ENCODE measurements at regions of chr6 and their contacts with region 1.

Region 1: GRCh38 chr6:36594029-36594815 is at the start of gene SRSF3:
- DNase-seq: peak; percentile 99
- H3K4me3 ChIP-seq: peak within 1 kb of the TSS; percentile 71 to 85 (median 81)
- H3K27ac ChIP-seq: peak within 1 kb of the TSS; percentile 92 to 98 (median 96)
- H3K4me1 ChIP-seq: peaks cover 0 to 39% (median 34%) of the 10 kb centered on the region in 4 donors
- H3K27me3 ChIP-seq: no peaks in the 10 kb centered on the region
- CTCF ChIP-seq: peak in 3 of 4 experiments; percentile 40 to 51 (median 43)
- EP300 ChIP-seq: peak in 2 of 4 donors; percentile 3 to 11
- POLR2A ChIP-seq: peak; percentile 100
- total RNA-seq, gene SRSF3: 101 to 168 (median 122) TPM

Region 2: DNA sequence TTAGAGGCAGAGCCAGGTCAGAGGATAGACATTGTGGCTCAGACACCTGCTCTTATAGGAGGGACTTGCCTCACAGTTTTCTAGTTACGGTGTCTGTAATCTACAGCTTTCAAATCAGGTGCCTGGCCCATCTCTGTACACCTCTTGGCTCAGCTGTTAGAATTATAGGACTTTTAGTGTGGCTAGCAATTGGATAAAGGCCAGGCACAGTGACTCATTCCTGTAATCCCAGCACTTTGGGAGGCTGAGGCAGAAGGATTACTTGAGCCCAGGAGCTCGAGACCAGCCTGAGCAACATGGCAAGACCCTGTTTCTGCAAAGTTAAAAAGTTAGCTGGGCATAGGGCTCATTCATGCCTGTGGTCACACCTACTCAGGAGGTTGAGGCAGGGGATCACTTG is 377.7 kb before region 1 on chr6:
- intact Hi-C with region 1: no loop called
- DNase-seq: no peak
- H3K4me3 ChIP-seq: no peak overlapping the region
- H3K27ac ChIP-seq: no peak overlapping the region
- H3K4me1 ChIP-seq: peaks cover 0 to 5% (median 0%) of the 10 kb centered on the region in 4 donors
- H3K27me3 ChIP-seq: no peaks in the 10 kb centered on the region
- CTCF ChIP-seq: no peak
- EP300 ChIP-seq: no peak
- POLR2A ChIP-seq: no peak

Region 3: DNA sequence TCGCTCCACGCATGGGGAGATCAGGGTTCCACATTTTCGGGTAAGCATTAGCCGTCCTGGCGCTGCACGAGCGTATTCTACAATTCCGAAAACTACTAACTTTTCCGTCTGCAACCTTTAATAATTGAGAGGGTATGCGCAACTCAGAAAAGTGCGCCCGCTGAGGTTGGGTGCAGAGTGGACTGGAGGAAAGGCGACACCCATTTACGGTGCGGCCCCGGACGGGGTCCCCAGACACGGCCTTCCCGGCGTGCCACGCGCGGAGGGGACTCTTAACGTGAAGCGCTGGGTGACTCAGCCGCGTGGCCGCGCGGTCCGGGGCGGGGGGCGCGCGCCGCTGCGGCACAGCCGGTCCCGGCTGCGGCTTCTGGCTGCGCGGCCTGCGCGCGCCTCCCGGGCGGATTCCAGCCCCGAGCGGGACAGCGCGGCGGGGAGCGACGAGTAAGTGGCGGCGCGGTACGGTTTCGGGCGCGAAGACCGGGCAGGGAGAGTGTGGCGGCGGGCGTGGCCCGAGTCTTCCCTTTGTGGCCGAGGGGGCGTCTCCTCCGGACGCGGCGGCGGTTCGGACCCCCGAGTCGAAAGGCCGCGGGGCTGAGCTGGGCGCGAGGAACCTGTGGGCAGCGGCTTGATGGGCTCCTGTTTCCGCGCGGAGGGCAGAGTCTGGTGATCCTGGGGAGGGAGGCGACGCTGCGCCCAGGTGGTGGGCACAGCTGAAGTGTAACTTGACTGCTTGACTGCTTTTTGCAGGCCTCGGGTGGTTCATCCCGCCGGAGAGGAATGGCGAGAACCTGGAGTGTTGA is 151.4 kb before region 1 on chr6 and contains the starts of genes KCTD20 and PXT1:
- intact Hi-C with region 1: loop called (anchors 2 kb)
- DNase-seq: peak; percentile 95
- H3K4me3 ChIP-seq: peak within 1 kb of the TSS; percentile 87 to 99 (median 94)
- H3K27ac ChIP-seq: peak within 1 kb of the TSS; percentile 97 to 99 (median 98)
- H3K4me1 ChIP-seq: peaks cover 2 to 41% (median 37%) of the 10 kb centered on the region in 4 donors
- H3K27me3 ChIP-seq: no peaks in the 10 kb centered on the region
- CTCF ChIP-seq: no peak
- EP300 ChIP-seq: peak in 2 of 4 donors; percentile 19 to 69
- POLR2A ChIP-seq: peak; percentile 32 to 69
- total RNA-seq, gene KCTD20: 48.5 to 71.3 (median 50.8) TPM
- total RNA-seq, gene PXT1: not detected

Measured in sigmoid colon (tissue), 7 donors.